BJ (cell line): ENCODE measurements at regions of chr16 and their contacts with region 1.

Region 1: DNA sequence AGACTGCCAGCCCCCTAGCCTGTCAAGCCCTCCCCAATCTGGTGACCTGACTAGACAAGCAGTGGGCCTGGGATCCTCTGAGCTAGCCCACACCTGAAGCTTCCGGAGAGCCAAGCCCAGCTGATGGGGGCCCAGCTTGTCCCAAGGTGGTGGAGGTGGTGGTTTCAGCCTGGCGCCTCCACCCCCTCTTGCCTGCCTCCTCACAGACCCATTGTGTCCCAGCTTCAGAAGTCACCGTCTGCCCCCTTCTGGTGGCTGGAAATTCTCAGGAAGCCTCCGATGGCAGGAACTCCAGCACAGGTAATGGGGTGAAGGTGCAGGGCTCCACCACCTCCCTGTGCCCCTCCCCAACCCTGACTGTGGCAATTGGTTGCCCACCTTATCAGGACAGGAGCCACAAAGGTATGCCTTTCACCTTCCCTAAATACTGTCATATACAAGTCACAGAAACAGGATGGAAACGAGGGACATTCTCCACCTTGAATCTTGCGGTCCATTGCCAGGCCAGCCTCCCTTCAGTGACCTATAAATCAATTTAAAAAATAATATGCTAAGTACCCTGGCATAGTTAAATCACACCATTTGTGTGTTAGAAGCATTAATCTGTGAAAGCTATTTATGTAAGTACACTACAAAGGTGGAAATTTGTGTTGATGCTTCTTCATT is 66.0 kb upstream of the ZNF423 start:
- DNase-seq: no peak
- H3K4me3 ChIP-seq: no peak overlapping the region
- H3K27me3 ChIP-seq: no peaks in the 10 kb centered on the region
- CTCF ChIP-seq: peak; percentile 58

Region 2: DNA sequence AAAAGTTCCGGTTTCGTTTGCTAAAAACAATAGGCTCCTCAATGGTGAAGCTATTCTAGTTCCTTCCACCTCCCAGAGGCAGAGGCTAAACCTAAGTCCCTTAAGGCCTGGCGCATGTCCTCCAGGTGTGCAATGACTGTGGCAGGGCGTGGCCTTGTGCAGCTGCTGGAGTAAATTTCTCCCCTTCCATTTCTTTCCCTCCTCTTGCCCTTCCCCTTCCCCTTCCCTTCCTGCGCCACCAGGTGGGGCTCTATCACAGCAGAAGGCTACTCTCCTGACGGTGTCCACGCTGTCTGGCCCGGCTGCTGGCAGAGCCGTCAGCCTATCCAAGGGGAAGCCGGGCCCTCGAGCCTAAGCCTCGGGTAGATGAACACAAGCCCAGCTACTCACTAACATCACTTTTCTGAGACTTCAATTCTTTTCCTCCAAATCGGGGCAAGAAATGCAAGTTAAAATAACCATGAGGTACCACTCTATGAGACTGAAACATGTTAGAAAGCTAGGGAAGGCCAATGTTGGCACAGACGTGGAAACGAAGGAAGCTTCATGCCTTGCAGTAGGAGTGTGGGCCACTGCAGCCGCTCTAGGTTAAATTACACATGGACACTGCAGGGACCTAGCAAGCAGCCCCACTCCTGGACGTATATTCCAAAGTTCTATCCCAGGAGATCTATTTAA is 513.9 kb before region 1 on chr16:
- CTCF ChIA-PET with region 1: interaction called, 24 read pairs
- POLR2A ChIA-PET with region 1: no interaction called
- DNase-seq: peak; percentile 3
- H3K4me3 ChIP-seq: no peak overlapping the region
- H3K27me3 ChIP-seq: no peaks in the 10 kb centered on the region
- CTCF ChIP-seq: peak; percentile 89

Region 3: GRCh38 chr16:49788572-49788971 is 133.4 kb before region 1 on chr16:
- CTCF ChIA-PET with region 1: no interaction called
- POLR2A ChIA-PET with region 1: no interaction called
- DNase-seq: no peak
- H3K4me3 ChIP-seq: no peak overlapping the region
- H3K27me3 ChIP-seq: no peaks in the 10 kb centered on the region
- CTCF ChIP-seq: no peak

Region 4: DNA sequence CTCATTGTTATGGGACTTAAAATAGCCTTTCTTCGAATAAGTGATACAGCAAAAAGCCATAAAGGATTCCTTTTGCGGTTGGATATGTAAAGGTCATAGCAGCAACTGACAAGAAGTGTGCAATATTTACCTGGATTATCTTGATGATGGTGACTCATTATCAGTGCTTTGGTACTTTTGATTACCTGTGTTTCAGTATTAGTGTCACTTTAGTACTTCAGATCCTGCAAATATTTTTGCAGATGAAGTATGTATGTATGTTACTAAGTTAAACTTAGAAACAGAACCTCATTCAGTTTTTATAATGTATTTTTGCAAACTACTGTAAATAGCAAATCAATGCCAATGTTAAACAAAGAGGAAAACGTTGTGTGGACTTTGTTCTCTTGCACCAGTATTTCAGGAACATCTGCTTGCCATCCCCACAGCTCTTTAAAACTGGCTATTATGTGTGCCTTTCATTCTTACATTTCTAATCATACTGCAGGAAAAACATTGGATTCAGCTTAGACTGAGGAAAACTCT is 113.6 kb after region 1 on chr16:
- CTCF ChIA-PET with region 1: no interaction called
- POLR2A ChIA-PET with region 1: no interaction called
- DNase-seq: no peak
- H3K4me3 ChIP-seq: no peak overlapping the region
- H3K27me3 ChIP-seq: no peaks in the 10 kb centered on the region
- CTCF ChIP-seq: no peak